ENCODE measurements at regions of chr2 and their contacts with region 1.

Region 1: GRCh38 chr2:201860636-201861066 is 54.3 kb downstream of the CDK15 start:
- DNase-seq: no peak
- ATAC-seq: peak; percentile 65
- H3K4me3 Mint-ChIP-seq: no peak overlapping the region
- H3K27ac Mint-ChIP-seq: no peak overlapping the region
- H3K4me1 Mint-ChIP-seq: peaks cover 8% of the 10 kb centered on the region
- H3K27me3 Mint-ChIP-seq: peaks cover 50% of the 10 kb centered on the region
- CTCF ChIP-seq: peak; percentile 42

Region 2: DNA sequence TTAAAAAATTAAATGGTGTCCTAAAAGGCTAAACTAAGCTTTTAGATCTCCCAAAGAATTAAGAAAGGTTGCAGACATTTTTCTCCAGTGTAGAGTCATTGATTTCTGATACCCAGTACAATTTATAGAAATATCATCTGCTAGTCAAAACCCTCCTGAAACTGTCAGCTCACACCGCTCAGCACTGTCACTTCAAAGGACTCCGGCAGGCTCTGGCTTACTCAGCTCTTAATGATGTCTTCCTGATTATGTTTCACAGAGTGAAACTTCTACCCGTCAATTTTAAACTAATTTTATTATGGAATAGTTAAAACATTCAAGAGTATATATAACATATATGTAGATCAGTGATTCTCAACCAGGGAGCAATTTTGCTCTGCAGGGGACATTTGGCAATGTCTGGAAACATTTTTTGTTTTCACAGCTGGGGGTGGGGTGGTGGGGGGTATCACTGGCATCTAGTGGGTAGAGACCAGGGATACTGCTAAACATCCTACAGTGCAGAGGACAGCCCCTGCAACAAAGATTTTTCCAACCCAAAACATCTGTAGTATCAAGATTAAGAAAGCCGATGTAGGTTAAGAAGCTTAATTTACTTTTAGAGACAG is 22.7 kb before region 1 on chr2:
- CTCF ChIA-PET with region 1: no interaction called
- POLR2A ChIA-PET with region 1: no interaction called
- intact Hi-C with region 1: no loop called
- DNase-seq: no peak
- ATAC-seq: no peak
- H3K4me3 Mint-ChIP-seq: no peak overlapping the region
- H3K27ac Mint-ChIP-seq: no peak overlapping the region
- H3K4me1 Mint-ChIP-seq: no peaks in the 10 kb centered on the region
- H3K27me3 Mint-ChIP-seq: peaks cover 6% of the 10 kb centered on the region
- CTCF ChIP-seq: no peak

Region 3: DNA sequence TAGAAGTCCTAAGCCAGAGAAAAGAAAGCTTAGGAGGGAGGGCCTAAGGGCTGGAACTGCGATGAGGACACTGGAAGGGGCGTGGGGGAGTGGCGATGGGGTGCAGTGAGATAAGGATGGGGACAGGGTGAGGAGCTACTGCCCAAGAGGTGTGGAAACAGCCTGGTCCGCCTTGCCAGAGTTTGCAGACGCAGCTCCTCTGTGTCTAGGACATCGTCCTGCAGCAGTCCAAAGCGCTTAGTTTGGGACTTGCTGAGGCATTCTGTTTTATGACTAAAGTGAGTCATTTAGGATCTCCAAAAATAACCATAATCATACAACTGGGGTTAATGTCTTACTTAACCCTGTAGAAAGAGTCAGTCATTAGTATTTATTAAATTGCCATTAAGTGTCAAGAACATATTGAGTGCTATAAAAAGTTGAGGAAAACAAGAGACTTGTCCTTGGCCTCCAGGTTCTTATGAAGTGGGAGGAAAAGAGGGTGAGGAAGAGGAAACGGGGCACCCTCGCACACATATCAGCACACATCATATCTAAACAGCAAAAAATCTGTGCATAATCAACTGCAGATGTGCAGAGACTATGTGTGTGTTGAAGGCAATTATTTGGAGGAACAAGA is 20.5 kb after region 1 on chr2:
- CTCF ChIA-PET with region 1: no interaction called
- POLR2A ChIA-PET with region 1: no interaction called
- intact Hi-C with region 1: no loop called
- DNase-seq: no peak
- ATAC-seq: no peak
- H3K4me3 Mint-ChIP-seq: no peak overlapping the region
- H3K27ac Mint-ChIP-seq: no peak overlapping the region
- H3K4me1 Mint-ChIP-seq: peaks cover 10% of the 10 kb centered on the region
- H3K27me3 Mint-ChIP-seq: peaks cover 53% of the 10 kb centered on the region
- CTCF ChIP-seq: no peak

Region 4: GRCh38 chr2:202033321-202034248 is 172.9 kb after region 1 on chr2 and contains the start of gene FZD7:
- CTCF ChIA-PET with region 1: no interaction called
- POLR2A ChIA-PET with region 1: no interaction called
- intact Hi-C with region 1: loop called (anchors 1 kb)
- DNase-seq: peak; percentile 79
- ATAC-seq: peak; percentile 87
- H3K4me3 Mint-ChIP-seq: peak within 1 kb of the TSS; percentile 86
- H3K27ac Mint-ChIP-seq: peak within 1 kb of the TSS; percentile 14
- H3K4me1 Mint-ChIP-seq: peaks cover 12% of the 10 kb centered on the region
- H3K27me3 Mint-ChIP-seq: peaks cover 17% of the 10 kb centered on the region
- CTCF ChIP-seq: no peak
- total RNA-seq, gene FZD7: 0.33 and 0.37 TPM in 2 replicates

Region 5: GRCh38 chr2:202056392-202057010 is 195.8 kb after region 1 on chr2:
- CTCF ChIA-PET with region 1: interaction called, 6 read pairs
- POLR2A ChIA-PET with region 1: interaction called, 4 read pairs
- intact Hi-C with region 1: loop called (anchors 1 kb)
- DNase-seq: no peak
- ATAC-seq: no peak
- H3K4me3 Mint-ChIP-seq: no peak overlapping the region
- H3K27ac Mint-ChIP-seq: no peak overlapping the region
- H3K4me1 Mint-ChIP-seq: no peaks in the 10 kb centered on the region
- H3K27me3 Mint-ChIP-seq: peaks cover 37% of the 10 kb centered on the region
- CTCF ChIP-seq: no peak

Region 6: DNA sequence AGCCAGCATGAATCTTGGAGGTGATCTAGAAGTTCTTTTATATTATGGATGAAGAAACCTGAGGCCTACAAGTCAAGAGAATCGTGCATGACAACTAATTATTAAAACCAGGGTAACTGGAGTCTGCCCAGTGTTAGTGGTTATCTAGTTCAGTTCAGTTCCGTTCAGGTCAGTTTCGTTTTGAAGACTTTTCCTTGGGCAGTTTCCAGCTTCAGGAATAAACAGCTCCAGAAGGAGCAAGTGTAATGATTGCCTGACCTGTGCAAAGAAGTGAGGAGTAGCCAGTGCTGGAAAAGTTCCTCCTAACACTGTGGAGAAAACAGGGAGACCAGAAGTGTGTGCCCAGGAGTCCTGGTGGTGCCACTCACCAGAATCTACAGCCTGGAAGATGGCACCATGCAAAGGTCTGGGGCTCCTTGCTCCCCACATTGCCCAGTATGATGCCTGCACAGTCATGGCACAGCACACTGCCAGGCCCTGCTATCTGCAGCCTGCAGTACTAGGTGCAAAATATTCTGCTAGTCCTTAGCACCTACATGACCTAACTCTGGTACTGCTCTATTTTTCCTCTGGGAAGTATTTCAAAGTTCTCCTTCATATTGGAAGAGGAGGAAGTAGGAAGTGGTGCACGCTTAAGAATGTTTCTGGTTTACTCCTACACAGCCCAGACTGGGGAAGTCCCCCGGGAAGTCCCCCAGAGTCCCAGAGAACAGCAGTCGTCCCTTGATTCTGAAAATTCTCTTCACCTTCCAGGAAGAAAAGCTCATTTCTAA is 312.0 kb after region 1 on chr2:
- CTCF ChIA-PET with region 1: interaction called, 142 read pairs
- POLR2A ChIA-PET with region 1: no interaction called
- intact Hi-C with region 1: no loop called
- DNase-seq: no peak
- ATAC-seq: peak; percentile 56
- H3K4me3 Mint-ChIP-seq: no peak overlapping the region
- H3K27ac Mint-ChIP-seq: no peak overlapping the region
- H3K4me1 Mint-ChIP-seq: peaks cover 17% of the 10 kb centered on the region
- H3K27me3 Mint-ChIP-seq: peaks cover 5% of the 10 kb centered on the region
- CTCF ChIP-seq: no peak